ENCODE measurements at regions of chr15 and their contacts with region 1.

Region 1: DNA sequence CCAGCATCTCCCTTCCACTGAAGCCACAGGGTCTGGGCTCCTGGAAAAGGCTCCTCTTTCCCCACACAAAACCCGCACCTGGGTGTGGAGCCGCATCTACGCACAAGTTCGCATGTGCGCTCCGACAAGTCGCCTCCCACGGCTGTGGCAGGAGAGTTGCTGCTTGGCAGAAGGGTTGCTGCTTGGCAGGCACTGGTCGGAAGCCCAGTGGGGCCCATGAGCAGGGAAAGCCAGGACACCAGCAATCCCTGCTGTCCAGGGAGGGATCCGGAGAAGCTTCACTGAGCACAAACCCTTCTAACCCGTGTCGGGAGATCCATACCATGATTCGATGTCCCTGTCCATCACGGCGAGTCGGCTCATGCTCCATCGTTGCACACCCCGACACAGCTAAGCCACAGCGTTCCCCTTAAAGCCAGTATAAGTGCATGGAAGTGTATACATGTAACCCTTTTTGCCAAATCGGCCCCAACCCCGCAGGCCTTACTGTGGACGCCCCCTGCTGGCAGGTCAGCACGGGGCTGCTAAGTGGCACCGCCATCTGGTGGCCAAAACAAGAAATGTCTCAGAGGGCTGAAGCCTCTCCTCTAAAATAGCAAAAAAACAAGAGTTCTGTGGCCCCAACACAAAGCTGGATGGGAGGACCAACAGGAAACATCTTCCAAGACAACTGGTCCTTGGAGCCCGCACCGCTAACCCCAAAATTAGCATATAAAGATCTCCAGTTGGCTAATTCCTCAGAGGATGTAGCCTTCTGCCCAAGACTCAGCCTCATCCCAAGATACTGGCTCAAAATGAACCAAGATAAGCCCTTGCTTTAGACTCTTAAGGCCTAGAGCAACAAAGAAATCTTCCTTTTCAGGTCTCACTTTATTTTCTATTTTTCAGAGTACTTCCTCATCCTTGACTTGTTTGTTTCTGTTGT is 8.3 kb downstream of the ANKRD63 start:
- DNase-seq: peak; percentile 78 to 84 (median 81)
- H3K4me3 ChIP-seq: no peak overlapping the region
- H3K4me3 Mint-ChIP-seq: no peak overlapping the region
- H3K27ac ChIP-seq: no peak overlapping the region
- H3K27ac Mint-ChIP-seq: peak overlapping the region in 3 of 7 donors; percentile 19 to 41 (median 36)
- H3K4me1 ChIP-seq: peaks cover 48 to 50% of the 10 kb centered on the region in 2 donors
- H3K4me1 Mint-ChIP-seq: peaks cover 44% of the 10 kb centered on the region
- H3K27me3 ChIP-seq: no peaks in the 10 kb centered on the region
- H3K27me3 Mint-ChIP-seq: peaks cover 12 to 25% (median 15%) of the 10 kb centered on the region in 3 donors
- CTCF ChIP-seq: peak; percentile 100

Region 2: DNA sequence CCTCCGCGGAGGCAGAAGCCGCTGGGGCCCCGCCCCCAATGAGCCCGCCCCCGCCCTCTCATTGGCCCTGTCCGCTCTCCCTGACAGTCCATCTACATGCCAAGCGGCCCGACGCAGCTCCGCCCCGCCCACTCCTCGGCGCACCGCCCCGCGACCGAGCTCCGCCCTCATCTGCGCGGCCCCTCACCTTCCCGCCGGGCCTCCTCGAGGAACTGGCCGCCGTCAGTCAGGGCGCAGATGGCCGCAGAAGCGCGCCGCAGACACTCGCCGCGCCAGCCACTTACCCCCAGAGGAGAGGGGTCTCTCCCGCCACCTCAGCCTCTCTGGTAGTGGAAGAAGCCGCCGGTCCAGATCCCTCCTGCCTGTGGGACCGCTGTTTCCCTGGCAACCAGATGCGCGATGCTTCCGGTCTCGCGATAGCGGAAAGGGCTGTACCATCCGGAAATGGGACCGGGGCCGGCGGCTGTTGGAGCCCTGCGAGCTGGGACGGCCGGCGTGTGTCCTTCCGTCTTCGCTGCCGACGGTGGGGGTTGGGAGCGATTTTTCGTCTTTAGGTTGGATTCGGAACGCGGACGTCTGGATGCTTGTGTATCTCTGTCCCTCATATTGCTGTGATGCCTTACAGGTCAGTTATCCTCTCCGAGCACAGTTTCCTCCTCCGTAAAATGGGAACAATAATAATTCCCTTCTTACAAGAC is 492.0 kb before region 1 on chr15 and contains the start of gene FSIP1:
- intact Hi-C with region 1: loop called in 1 of 2 experiments (anchors 10 kb)
- DNase-seq: peak; percentile 94 to 95 (median 95)
- H3K4me3 ChIP-seq: peak within 1 kb of the TSS; percentile 81 to 91 (median 89)
- H3K4me3 Mint-ChIP-seq: peak within 1 kb of the TSS; percentile 94
- H3K27ac ChIP-seq: peak within 1 kb of the TSS; percentile 45 to 83
- H3K27ac Mint-ChIP-seq: peak within 1 kb of the TSS; percentile 87 to 96 (median 92)
- H3K4me1 ChIP-seq: peaks cover 17 to 20% of the 10 kb centered on the region in 2 donors
- H3K4me1 Mint-ChIP-seq: peaks cover 27% of the 10 kb centered on the region
- H3K27me3 ChIP-seq: no peaks in the 10 kb centered on the region
- H3K27me3 Mint-ChIP-seq: no peaks in the 10 kb centered on the region
- CTCF ChIP-seq: no peak
- polyA plus RNA-seq, gene FSIP1: 0.10 to 0.48 (median 0.21) TPM

Region 3: DNA sequence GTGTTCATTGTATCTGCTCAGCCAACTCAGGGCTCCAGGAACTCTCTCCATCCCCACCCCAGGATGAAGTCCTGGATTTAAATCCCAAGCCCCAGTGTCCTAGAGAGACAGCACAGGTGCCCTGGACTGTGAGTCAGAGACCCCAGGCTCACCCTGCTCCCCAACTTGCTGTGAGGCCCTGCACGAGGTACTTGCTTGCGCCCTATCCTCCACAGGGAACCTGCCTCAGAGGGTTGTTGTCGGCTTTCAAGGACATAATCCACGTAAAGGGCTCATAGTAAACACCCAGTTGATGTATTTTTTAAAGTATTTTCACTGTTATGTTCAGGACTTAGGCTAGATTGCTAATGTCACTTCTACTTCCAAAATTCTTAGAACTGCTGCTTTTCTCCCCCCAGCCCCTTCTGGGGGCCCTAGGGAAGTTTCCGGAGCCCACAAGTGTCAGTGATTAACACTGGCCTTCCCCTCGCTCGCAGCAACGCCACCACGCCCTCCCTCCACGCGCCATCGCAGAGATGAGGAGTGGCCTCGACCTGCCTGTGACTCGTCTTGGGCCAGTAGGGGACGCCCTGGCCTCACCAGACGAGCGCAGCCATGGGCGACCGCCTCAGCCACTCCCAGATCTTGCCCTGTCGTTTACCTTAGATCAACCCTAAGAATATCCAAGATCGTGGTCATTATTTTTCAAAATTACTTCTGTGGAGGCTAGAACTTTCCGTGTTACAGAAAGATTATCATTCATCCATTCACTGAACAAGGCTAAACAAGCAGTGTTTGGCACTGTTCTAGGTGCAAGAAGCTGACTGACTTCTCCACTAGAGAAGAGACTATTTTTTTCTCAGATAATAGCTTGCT is 229.7 kb before region 1 on chr15:
- intact Hi-C with region 1: loop called (anchors 5 kb)
- DNase-seq: peak; percentile 85 to 95 (median 92)
- H3K4me3 ChIP-seq: peak overlapping the region in 1 of 3 experiments; percentile 39
- H3K4me3 Mint-ChIP-seq: peak overlapping the region; percentile 69 to 76
- H3K27ac ChIP-seq: peak overlapping the region in 1 of 2 donors; percentile 97
- H3K27ac Mint-ChIP-seq: peak overlapping the region; percentile 47 to 95 (median 81)
- H3K4me1 ChIP-seq: peaks cover 50 to 61% of the 10 kb centered on the region in 2 donors
- H3K4me1 Mint-ChIP-seq: peaks cover 59% of the 10 kb centered on the region
- H3K27me3 ChIP-seq: no peaks in the 10 kb centered on the region
- H3K27me3 Mint-ChIP-seq: peaks cover 0 to 2% (median 0%) of the 10 kb centered on the region in 3 donors
- CTCF ChIP-seq: peak; percentile 92

Region 4: GRCh38 chr15:40072216-40072990 is 202.2 kb before region 1 on chr15:
- intact Hi-C with region 1: no loop called
- DNase-seq: no peak
- H3K4me3 ChIP-seq: no peak overlapping the region
- H3K4me3 Mint-ChIP-seq: peak overlapping the region; percentile 67 to 71
- H3K27ac ChIP-seq: no peak overlapping the region
- H3K27ac Mint-ChIP-seq: peak overlapping the region in 2 of 7 donors; percentile 3 to 19
- H3K4me1 ChIP-seq: peaks cover 16 to 17% of the 10 kb centered on the region in 2 donors
- H3K4me1 Mint-ChIP-seq: peaks cover 27% of the 10 kb centered on the region
- H3K27me3 ChIP-seq: no peaks in the 10 kb centered on the region
- H3K27me3 Mint-ChIP-seq: peaks cover 5 to 12% (median 8%) of the 10 kb centered on the region in 3 donors
- CTCF ChIP-seq: no peak

Region 5: GRCh38 chr15:40310001-40310959 is 35.7 kb after region 1 on chr15:
- intact Hi-C with region 1: loop called (anchors 5 kb)
- DNase-seq: peak; percentile 46 to 68 (median 66)
- H3K4me3 ChIP-seq: peak overlapping the region in 1 of 3 experiments; percentile 99
- H3K4me3 Mint-ChIP-seq: peak overlapping the region in 1 of 2 donors; percentile 99
- H3K27ac ChIP-seq: no peak overlapping the region
- H3K27ac Mint-ChIP-seq: peak overlapping the region in 2 of 7 donors; percentile 86 to 95
- H3K4me1 ChIP-seq: peaks cover 41 to 52% of the 10 kb centered on the region in 2 donors
- H3K4me1 Mint-ChIP-seq: peaks cover 52% of the 10 kb centered on the region
- H3K27me3 ChIP-seq: peaks cover 3 to 10% of the 10 kb centered on the region in 2 donors
- H3K27me3 Mint-ChIP-seq: peaks cover 12 to 16% (median 12%) of the 10 kb centered on the region in 3 donors
- CTCF ChIP-seq: peak; percentile 88

Region 6: GRCh38 chr15:40421246-40422157 is 146.9 kb after region 1 on chr15:
- intact Hi-C with region 1: loop called (anchors 1 to 5 kb)
- DNase-seq: peak; percentile 67 to 73 (median 69)
- H3K4me3 ChIP-seq: peak overlapping the region in 1 of 3 experiments; percentile 54
- H3K4me3 Mint-ChIP-seq: peak overlapping the region; percentile 60 to 74
- H3K27ac ChIP-seq: no peak overlapping the region
- H3K27ac Mint-ChIP-seq: no peak overlapping the region
- H3K4me1 ChIP-seq: peaks cover 14 to 18% of the 10 kb centered on the region in 2 donors
- H3K4me1 Mint-ChIP-seq: peaks cover 19% of the 10 kb centered on the region
- H3K27me3 ChIP-seq: no peaks in the 10 kb centered on the region
- H3K27me3 Mint-ChIP-seq: peaks cover 2 to 3% (median 2%) of the 10 kb centered on the region in 3 donors
- CTCF ChIP-seq: peak; percentile 98

Region 7: GRCh38 chr15:40440743-40441564 is 166.3 kb after region 1 on chr15 and contains the start of gene BAHD1:
- intact Hi-C with region 1: no loop called
- DNase-seq: peak; percentile 87 to 91 (median 88)
- H3K4me3 ChIP-seq: peak within 1 kb of the TSS; percentile 45 to 84 (median 59)
- H3K4me3 Mint-ChIP-seq: peak within 1 kb of the TSS; percentile 95 to 99
- H3K27ac ChIP-seq: peak within 1 kb of the TSS in 1 of 2 donors; percentile 0
- H3K27ac Mint-ChIP-seq: peak within 1 kb of the TSS in 5 of 7 donors; percentile 22 to 85 (median 61)
- H3K4me1 ChIP-seq: peaks cover 24 to 42% of the 10 kb centered on the region in 2 donors
- H3K4me1 Mint-ChIP-seq: peaks cover 49% of the 10 kb centered on the region
- H3K27me3 ChIP-seq: peaks cover 28 to 53% of the 10 kb centered on the region in 2 donors
- H3K27me3 Mint-ChIP-seq: peaks cover 60 to 75% (median 61%) of the 10 kb centered on the region in 3 donors
- CTCF ChIP-seq: no peak
- polyA plus RNA-seq, gene BAHD1: 0.67 to 8.9 (median 0.79) TPM

Measured in CD14-positive monocyte (primary cell).